Mammary epithelial cell (primary cell): ENCODE measurements at regions of chr2 and their contacts with region 1.

Region 1: GRCh38 chr2:33441235-33441810 is 35.1 kb upstream of the RASGRP3 start:
- DNase-seq: peak; percentile 51
- H3K4me3 ChIP-seq: no peak overlapping the region
- H3K27ac ChIP-seq: no peak overlapping the region
- H3K4me1 ChIP-seq: peaks cover 6% of the 10 kb centered on the region
- H3K27me3 ChIP-seq: no peaks in the 10 kb centered on the region
- CTCF ChIP-seq: peak; percentile 76 to 82

Region 2: GRCh38 chr2:32772638-32773447 is 668.5 kb before region 1 on chr2:
- CTCF ChIA-PET with region 1: no interaction called
- dilution Hi-C with region 1: no loop called
- in situ Hi-C with region 1: no loop called
- intact Hi-C with region 1: loop called (anchors 5 kb)
- DNase-seq: peak; percentile 19
- H3K4me3 ChIP-seq: no peak overlapping the region
- H3K27ac ChIP-seq: no peak overlapping the region
- H3K4me1 ChIP-seq: no peaks in the 10 kb centered on the region
- H3K27me3 ChIP-seq: no peaks in the 10 kb centered on the region
- CTCF ChIP-seq: peak; percentile 36 to 66

Region 3: DNA sequence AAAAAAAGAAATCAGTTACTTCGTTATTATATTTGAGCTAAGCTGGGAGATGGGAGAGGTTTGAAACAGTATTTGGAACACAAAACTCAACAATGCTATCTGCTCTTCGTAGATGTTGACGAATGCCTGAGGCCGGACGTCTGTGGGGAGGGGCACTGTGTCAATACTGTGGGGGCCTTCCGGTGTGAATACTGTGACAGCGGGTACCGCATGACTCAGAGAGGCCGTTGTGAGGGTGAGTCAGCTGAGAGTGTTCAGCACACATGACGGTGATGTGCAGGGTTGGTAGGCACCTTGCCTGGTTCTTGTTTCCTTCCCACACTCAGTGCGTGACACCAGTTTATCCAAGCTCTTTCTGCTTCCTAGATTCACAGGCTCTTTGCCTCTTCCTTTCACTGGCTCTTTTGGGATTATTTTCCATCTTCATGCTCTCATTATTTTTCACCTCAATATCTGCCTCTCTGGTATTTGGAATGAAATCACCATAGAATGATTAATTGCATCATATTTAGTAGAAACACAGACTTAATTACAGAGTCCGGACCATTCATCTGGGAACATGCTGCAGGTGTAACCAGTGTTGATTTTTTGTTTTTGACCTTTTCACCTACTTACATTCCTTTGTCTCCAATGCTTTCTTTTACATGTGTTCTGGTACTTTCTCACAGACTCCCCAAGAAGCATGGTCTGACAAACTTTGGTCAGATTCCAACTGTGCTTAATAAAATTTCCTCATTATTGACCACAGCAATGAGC is 165.5 kb before region 1 on chr2:
- CTCF ChIA-PET with region 1: no interaction called
- dilution Hi-C with region 1: no loop called
- in situ Hi-C with region 1: no loop called
- intact Hi-C with region 1: loop called (anchors 10 kb)
- DNase-seq: peak; percentile 50
- H3K4me3 ChIP-seq: no peak overlapping the region
- H3K27ac ChIP-seq: no peak overlapping the region
- H3K4me1 ChIP-seq: no peaks in the 10 kb centered on the region
- H3K27me3 ChIP-seq: no peaks in the 10 kb centered on the region
- CTCF ChIP-seq: no peak

Region 4: GRCh38 chr2:33372940-33373553 is 68.3 kb before region 1 on chr2:
- CTCF ChIA-PET with region 1: no interaction called
- dilution Hi-C with region 1: no loop called
- in situ Hi-C with region 1: no loop called
- intact Hi-C with region 1: loop called (anchors 5 kb)
- DNase-seq: peak; percentile 43
- H3K4me3 ChIP-seq: no peak overlapping the region
- H3K27ac ChIP-seq: no peak overlapping the region
- H3K4me1 ChIP-seq: no peaks in the 10 kb centered on the region
- H3K27me3 ChIP-seq: no peaks in the 10 kb centered on the region
- CTCF ChIP-seq: peak; percentile 76 to 81

Region 5: DNA sequence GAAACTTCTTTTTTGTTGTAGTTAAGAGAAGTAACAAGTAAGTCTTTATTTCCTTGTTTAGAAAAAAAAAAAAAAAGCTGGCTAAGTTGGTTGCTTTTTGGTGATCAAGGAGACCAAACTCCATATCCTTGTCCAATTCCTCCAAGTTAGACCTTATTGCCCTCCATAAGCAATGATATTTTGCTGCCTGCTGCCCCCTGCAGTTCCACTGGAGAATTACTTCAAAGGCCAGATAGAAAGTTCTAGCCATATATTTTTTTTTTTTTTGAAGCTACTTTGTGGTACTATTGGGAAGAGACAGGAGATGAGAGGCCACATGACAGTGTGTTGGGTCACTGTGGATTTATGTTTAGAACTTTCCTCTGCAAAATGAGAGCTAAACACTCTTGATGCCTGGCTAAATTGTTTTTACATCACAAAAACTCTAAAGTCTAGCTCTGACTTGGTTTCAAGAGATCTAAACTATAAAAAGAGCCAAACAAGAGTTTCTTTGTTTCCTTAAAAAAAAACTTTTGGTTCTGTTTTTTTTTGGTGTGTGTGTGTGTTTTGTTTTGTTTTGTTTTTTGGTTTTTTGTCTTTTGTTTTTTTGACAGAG is 45.6 kb before region 1 on chr2:
- CTCF ChIA-PET with region 1: no interaction called
- dilution Hi-C with region 1: no loop called
- in situ Hi-C with region 1: no loop called
- intact Hi-C with region 1: no loop called
- DNase-seq: peak; percentile 40
- H3K4me3 ChIP-seq: no peak overlapping the region
- H3K27ac ChIP-seq: no peak overlapping the region
- H3K4me1 ChIP-seq: no peaks in the 10 kb centered on the region
- H3K27me3 ChIP-seq: no peaks in the 10 kb centered on the region
- CTCF ChIP-seq: peak; percentile 68 to 75

Region 6: GRCh38 chr2:33412920-33413319 is 28.4 kb before region 1 on chr2:
- CTCF ChIA-PET with region 1: interaction called, 6 read pairs
- dilution Hi-C with region 1: no loop called
- in situ Hi-C with region 1: no loop called
- intact Hi-C with region 1: loop called (anchors 1 kb)
- DNase-seq: peak; percentile 16
- H3K4me3 ChIP-seq: no peak overlapping the region
- H3K27ac ChIP-seq: no peak overlapping the region
- H3K4me1 ChIP-seq: peaks cover 10% of the 10 kb centered on the region
- H3K27me3 ChIP-seq: no peaks in the 10 kb centered on the region
- CTCF ChIP-seq: peak; percentile 40 to 47

Region 7: GRCh38 chr2:33583194-33583938 is 142.0 kb after region 1 on chr2:
- CTCF ChIA-PET with region 1: no interaction called
- dilution Hi-C with region 1: no loop called
- in situ Hi-C with region 1: no loop called
- intact Hi-C with region 1: loop called (anchors 2 kb)
- DNase-seq: peak; percentile 7
- H3K4me3 ChIP-seq: no peak overlapping the region
- H3K27ac ChIP-seq: no peak overlapping the region
- H3K4me1 ChIP-seq: no peaks in the 10 kb centered on the region
- H3K27me3 ChIP-seq: no peaks in the 10 kb centered on the region
- CTCF ChIP-seq: peak; percentile 71 to 85

Region 8: GRCh38 chr2:33607178-33607803 is 166.0 kb after region 1 on chr2:
- CTCF ChIA-PET with region 1: interaction called, 41 read pairs
- dilution Hi-C with region 1: no loop called
- in situ Hi-C with region 1: no loop called
- intact Hi-C with region 1: no loop called
- DNase-seq: no peak
- H3K4me3 ChIP-seq: no peak overlapping the region
- H3K27ac ChIP-seq: no peak overlapping the region
- H3K4me1 ChIP-seq: no peaks in the 10 kb centered on the region
- H3K27me3 ChIP-seq: no peaks in the 10 kb centered on the region
- CTCF ChIP-seq: no peak

Region 9: DNA sequence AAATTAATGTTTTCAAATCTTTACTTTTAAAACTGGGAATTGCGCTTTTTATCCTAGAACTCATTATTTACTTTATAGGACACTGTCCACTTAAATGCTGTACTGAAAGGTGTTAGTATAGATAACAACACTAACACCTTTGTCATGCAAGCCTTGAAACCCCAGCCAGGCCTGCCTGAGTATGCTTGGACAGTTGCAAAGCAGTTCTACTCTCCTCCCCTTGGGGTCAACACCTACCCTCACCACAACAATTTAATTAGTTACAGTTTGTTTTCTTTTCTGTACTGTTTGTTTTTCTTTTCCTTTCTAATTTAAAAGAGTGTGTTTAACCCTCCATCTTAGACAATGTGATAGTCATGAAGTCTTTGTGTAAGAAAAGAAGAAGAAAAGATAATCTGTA is 176.7 kb after region 1 on chr2:
- CTCF ChIA-PET with region 1: no interaction called
- dilution Hi-C with region 1: no loop called
- in situ Hi-C with region 1: no loop called
- intact Hi-C with region 1: no loop called
- DNase-seq: no peak
- H3K4me3 ChIP-seq: no peak overlapping the region
- H3K27ac ChIP-seq: no peak overlapping the region
- H3K4me1 ChIP-seq: no peaks in the 10 kb centered on the region
- H3K27me3 ChIP-seq: no peaks in the 10 kb centered on the region
- CTCF ChIP-seq: no peak